Naive thymus-derived CD4-positive, alpha-beta T cell (primary cell): ENCODE measurements at regions of chr19 and their contacts with region 1.

Region 1: DNA sequence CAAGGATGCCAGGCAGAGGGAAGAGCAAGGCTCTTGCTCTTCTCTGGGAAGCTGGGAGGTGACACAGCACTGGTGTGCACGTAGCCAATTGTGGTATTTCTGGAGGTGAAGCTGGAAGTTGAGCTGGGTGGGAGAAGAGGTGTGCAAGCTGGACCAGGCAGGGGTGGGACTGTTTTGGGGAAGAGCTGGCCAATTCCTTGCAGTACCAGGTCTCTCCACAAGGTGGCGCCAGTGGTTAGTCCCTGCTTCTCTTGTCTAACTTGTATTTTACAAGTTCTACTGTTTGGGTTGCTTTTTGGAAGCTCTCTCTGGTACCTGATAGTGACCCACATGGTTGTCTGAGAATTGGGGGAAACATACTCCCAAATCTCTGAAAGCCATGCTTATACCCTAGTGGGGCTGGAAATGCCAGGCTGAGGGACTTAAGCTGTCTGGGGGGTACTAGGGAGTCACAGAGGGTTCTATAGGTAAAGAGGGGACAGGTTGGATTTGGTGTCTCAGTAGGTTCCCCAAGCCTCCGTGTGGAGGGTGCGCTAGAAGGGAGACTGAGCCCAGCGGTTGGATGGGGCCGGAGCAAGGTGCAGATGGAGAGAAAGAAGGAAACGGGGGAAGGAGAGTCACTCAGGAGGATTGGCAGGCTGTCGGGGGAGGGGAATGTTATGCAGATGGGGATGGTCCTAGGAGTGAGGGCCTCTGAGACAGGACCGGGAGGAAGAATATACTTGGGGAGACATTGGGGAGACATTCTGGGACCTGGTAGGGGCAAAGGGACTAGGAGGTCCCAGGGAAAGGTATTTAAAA is 3.0 kb downstream of the HPN start:
- DNase-seq: peak in 7 of 9 donors; percentile 36 to 68 (median 50)
- ATAC-seq: peak; percentile 46
- H3K4me3 ChIP-seq: no peak overlapping the region
- H3K4me3 Mint-ChIP-seq: peak overlapping the region in 5 of 10 donors; percentile 24 to 49 (median 29)
- H3K27ac ChIP-seq: no peak overlapping the region
- H3K27ac Mint-ChIP-seq: peak overlapping the region in 6 of 9 donors; percentile 40 to 88 (median 68)
- H3K4me1 ChIP-seq: peaks cover 15 to 16% of the 10 kb centered on the region in 2 donors
- H3K4me1 Mint-ChIP-seq: peaks cover 30 to 43% (median 38%) of the 10 kb centered on the region in 7 donors
- H3K27me3 ChIP-seq: no peaks in the 10 kb centered on the region
- H3K27me3 Mint-ChIP-seq: peaks cover 0 to 29% (median 10%) of the 10 kb centered on the region in 5 donors

Region 2: DNA sequence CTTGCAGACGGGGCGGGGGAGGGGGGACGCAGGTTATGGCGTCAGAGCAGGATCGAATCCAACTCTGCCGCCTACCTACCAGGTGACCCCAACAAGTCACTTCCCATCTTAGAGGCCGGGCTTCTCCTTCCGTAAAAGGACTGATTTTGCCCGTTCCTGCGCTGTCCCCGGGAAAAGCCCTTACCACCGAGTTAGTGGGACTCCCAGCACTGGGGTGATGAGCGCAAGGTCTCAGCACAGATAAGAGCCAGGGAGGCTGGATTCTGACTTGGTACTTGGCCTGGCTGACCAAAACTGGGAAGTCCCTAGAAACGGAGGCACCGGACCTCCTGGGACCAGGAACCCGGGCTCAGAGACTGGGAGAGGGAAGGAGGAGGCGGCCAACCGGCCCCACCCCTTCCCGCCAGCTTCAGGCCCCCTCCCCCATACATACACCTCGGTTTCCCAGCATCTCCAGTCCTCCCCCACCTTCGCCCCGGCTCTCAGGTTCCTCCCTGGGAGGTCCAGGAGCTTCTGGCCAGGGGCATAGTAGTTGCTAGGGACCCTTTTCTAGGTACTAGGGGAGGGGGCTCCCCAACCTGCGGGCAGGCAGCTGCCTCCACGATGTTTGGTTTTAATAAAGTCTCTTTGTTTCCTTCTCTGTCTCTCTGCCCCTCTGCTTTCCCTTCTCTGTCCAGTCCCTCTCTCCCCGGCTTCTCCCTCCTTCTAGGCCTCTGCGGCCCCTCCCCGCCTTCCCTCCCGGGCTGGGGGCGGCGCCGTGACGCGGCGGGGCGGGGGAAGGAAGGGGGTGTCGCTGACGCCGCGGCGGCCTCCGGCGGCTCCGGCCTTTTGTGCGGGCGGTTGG is 44.8 kb before region 1 on chr19 and contains the start of gene GRAMD1A:
- CTCF ChIA-PET with region 1: no interaction called
- POLR2A ChIA-PET with region 1: interaction called, 4 read pairs
- intact Hi-C with region 1: loop called in 1 of 2 experiments (anchors 5 kb)
- DNase-seq: peak; percentile 48 to 86 (median 63)
- ATAC-seq: peak; percentile 74
- H3K4me3 ChIP-seq: peak within 1 kb of the TSS; percentile 72
- H3K4me3 Mint-ChIP-seq: peak within 1 kb of the TSS; percentile 94 to 100 (median 98)
- H3K27ac ChIP-seq: peak within 1 kb of the TSS; percentile 97
- H3K27ac Mint-ChIP-seq: peak within 1 kb of the TSS; percentile 95 to 100 (median 98)
- H3K4me1 ChIP-seq: peaks cover 66 to 72% of the 10 kb centered on the region in 2 donors
- H3K4me1 Mint-ChIP-seq: peaks cover 58 to 81% (median 73%) of the 10 kb centered on the region in 7 donors
- H3K27me3 ChIP-seq: no peaks in the 10 kb centered on the region
- H3K27me3 Mint-ChIP-seq: no peaks in the 10 kb centered on the region
- total RNA-seq, gene GRAMD1A: 90.1 to 286 (median 253) TPM

Region 3: GRCh38 chr19:35030257-35031071 is 14.1 kb before region 1 on chr19 and contains the start of gene SCN1B:
- CTCF ChIA-PET with region 1: interaction called, 3 read pairs
- POLR2A ChIA-PET with region 1: interaction called, 4 read pairs
- intact Hi-C with region 1: loop called in 1 of 2 experiments (anchors 2 kb)
- DNase-seq: peak in 7 of 9 donors; percentile 29 to 79 (median 36)
- ATAC-seq: peak; percentile 78
- H3K4me3 ChIP-seq: peak within 1 kb of the TSS; percentile 24
- H3K4me3 Mint-ChIP-seq: peak within 1 kb of the TSS; percentile 65 to 94 (median 80)
- H3K27ac ChIP-seq: no peak within 1 kb of the TSS
- H3K27ac Mint-ChIP-seq: peak within 1 kb of the TSS in 6 of 9 donors; percentile 29 to 82 (median 52)
- H3K4me1 ChIP-seq: peaks cover 0 to 4% of the 10 kb centered on the region in 2 donors
- H3K4me1 Mint-ChIP-seq: peaks cover 5 to 14% (median 10%) of the 10 kb centered on the region in 7 donors
- H3K27me3 ChIP-seq: peaks cover 0 to 5% of the 10 kb centered on the region in 2 donors
- H3K27me3 Mint-ChIP-seq: peaks cover 13 to 36% (median 19%) of the 10 kb centered on the region in 5 donors
- total RNA-seq, gene SCN1B: 0.48 to 1.9 (median 1.8) TPM

Region 4: DNA sequence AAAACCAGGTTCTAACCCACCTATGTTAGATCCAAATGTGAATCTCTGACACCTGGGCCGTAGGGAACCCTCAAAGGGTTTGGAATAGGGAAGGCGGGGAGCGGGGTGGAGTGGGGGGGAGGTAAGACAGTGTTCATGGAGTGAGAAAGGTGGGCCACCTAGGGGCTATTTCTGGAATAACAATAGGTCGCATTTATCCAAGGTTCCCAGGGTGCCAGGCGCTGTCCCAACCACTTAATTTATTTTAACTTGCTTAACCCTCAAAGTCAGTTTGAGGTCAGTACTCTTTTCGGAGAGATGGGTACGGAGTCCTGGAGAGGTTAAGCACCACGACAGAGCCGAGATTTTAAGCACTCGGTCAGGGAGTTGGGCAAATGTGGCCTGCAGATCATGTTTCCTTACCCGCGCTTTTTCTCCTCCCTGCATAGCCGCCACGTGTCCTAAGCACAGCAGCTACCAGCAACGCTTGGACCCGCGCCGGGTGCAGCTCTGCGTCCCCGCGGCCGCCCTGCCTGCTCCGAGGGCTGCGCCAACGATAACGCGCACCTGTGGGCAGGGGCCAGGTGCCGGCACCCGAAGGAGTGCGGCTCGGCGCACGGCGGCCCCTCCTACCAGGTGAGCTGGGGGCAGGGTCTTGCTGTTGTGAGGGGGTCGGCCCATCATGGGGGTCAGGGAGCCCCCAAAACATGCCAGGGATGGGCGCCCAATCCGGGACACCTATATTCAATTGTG is 46.2 kb after region 1 on chr19:
- CTCF ChIA-PET with region 1: interaction called, 3 read pairs
- POLR2A ChIA-PET with region 1: no interaction called
- intact Hi-C with region 1: loop called in 1 of 2 experiments (anchors 10 kb)
- DNase-seq: peak in 7 of 9 donors; percentile 13 to 43 (median 30)
- ATAC-seq: peak; percentile 80
- H3K4me3 ChIP-seq: no peak overlapping the region
- H3K4me3 Mint-ChIP-seq: peak overlapping the region in 4 of 10 donors; percentile 23 to 56 (median 30)
- H3K27ac ChIP-seq: no peak overlapping the region
- H3K27ac Mint-ChIP-seq: no peak overlapping the region
- H3K4me1 ChIP-seq: peaks cover 7 to 16% of the 10 kb centered on the region in 2 donors
- H3K4me1 Mint-ChIP-seq: peaks cover 0 to 10% (median 4%) of the 10 kb centered on the region in 7 donors
- H3K27me3 ChIP-seq: no peaks in the 10 kb centered on the region
- H3K27me3 Mint-ChIP-seq: peaks cover 0 to 10% (median 3%) of the 10 kb centered on the region in 5 donors